Activated CD4-positive, alpha-beta memory T cell treated with anti-CD3 and anti-CD28 coated beads for 36 hours (primary cell): ENCODE measurements at regions of chr18 and their contacts with region 1.

Region 1: GRCh38 chr18:59085797-59086196 is 53.9 kb upstream of the SEC11C start:
- DNase-seq: no peak
- H3K4me3 Mint-ChIP-seq: no peak overlapping the region
- H3K27ac Mint-ChIP-seq: no peak overlapping the region
- H3K4me1 Mint-ChIP-seq: peaks cover 8% of the 10 kb centered on the region
- H3K27me3 Mint-ChIP-seq: peaks cover 16% of the 10 kb centered on the region

Region 2: GRCh38 chr18:59123588-59124369 is 38.0 kb after region 1 on chr18:
- CTCF ChIA-PET with region 1: interaction called, 20 read pairs
- POLR2A ChIA-PET with region 1: interaction called, 3 read pairs
- intact Hi-C with region 1: loop called (anchors 5 kb)
- DNase-seq: peak; percentile 76
- H3K4me3 Mint-ChIP-seq: no peak overlapping the region
- H3K27ac Mint-ChIP-seq: peak overlapping the region; percentile 78
- H3K4me1 Mint-ChIP-seq: peaks cover 10% of the 10 kb centered on the region
- H3K27me3 Mint-ChIP-seq: peaks cover 24% of the 10 kb centered on the region

Region 3: DNA sequence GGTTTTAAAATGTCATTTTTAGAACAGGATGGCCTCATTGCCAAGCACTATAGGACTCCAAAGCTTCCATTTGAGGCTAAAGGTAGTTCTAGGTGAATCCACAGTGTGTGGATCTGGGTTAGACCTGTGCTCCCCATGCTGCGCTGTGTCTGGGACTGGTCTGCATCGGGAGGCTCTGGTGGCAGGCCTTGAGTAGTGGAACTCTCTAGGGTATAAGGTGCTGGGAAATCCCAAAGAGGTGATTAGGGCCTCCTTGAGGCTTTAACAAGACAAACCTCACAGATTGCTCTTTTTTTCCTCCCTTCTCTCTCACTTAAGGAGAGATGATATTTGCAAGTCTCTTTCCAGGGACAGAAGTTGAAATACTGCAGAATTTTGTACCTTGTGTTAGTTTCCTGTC is 63.2 kb after region 1 on chr18:
- CTCF ChIA-PET with region 1: interaction called, 38 read pairs
- POLR2A ChIA-PET with region 1: no interaction called
- intact Hi-C with region 1: loop called (anchors 1 kb)
- DNase-seq: no peak
- H3K4me3 Mint-ChIP-seq: no peak overlapping the region
- H3K27ac Mint-ChIP-seq: peak overlapping the region; percentile 51
- H3K4me1 Mint-ChIP-seq: peaks cover 49% of the 10 kb centered on the region
- H3K27me3 Mint-ChIP-seq: no peaks in the 10 kb centered on the region

Region 4: GRCh38 chr18:59220784-59221765 is 135.3 kb after region 1 on chr18:
- CTCF ChIA-PET with region 1: interaction called, 8 read pairs
- POLR2A ChIA-PET with region 1: no interaction called
- intact Hi-C with region 1: loop called (anchors 5 kb)
- DNase-seq: no peak
- H3K4me3 Mint-ChIP-seq: no peak overlapping the region
- H3K27ac Mint-ChIP-seq: no peak overlapping the region
- H3K4me1 Mint-ChIP-seq: peaks cover 12% of the 10 kb centered on the region
- H3K27me3 Mint-ChIP-seq: peaks cover 57% of the 10 kb centered on the region